T-cell (primary cell): ENCODE measurements at regions of chr5 and their contacts with region 1.

Region 1: DNA sequence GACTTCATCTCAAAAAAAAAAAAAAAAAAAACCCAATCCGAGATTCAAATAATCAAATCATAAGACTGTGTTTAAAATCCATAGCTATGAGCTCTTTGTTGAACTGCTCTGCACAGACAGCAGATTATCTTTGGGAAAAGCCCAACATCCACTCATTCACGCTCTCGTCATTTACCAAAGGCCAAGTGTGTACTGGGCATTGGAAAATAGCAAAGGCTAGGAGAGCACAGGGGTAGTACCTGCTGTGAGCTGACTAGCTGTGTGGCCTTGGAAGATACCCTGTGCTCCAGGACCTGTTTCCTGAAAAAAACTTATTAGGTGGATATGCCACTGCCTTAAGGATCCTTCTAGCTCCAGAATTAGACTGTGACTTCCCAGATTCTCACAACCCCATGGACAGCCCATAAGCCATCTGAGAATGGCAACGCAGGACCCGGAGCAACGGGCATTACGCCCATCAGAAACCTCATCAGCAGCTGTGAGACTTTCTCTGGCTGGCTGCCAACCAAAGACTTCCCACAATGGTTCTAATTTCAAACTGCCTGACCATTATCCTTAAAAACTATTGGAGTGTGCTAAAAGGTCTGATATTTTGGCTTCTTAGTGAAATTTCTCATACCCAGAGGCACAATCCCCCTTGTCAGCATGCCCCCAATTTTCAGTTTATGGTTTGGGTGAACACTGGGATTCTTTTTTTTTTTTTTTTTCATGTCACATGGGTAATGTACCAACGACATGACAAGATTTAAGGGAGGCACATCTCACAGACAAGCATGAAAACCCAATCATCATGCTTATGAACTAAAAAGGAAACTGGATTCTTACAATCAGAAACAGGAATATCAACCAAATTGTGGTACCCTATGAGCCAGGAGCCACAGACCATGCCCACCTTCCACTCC is 16.8 kb downstream of the SERINC5 start:
- DNase-seq: peak in 4 of 35 experiments; percentile 7 to 48 (median 30)
- ATAC-seq: no peak
- H3K4me3 ChIP-seq: peak overlapping the region in 1 of 2 donors; percentile 15
- H3K4me3 Mint-ChIP-seq: peak overlapping the region; percentile 21 to 68 (median 37)
- H3K27ac ChIP-seq: peak overlapping the region; percentile 25
- H3K27ac Mint-ChIP-seq: peak overlapping the region; percentile 76 to 82
- H3K4me1 ChIP-seq: peaks cover 42 to 55% of the 10 kb centered on the region in 2 experiments
- H3K4me1 Mint-ChIP-seq: peaks cover 77 to 84% (median 83%) of the 10 kb centered on the region in 3 donors
- H3K27me3 ChIP-seq: no peaks in the 10 kb centered on the region
- H3K27me3 Mint-ChIP-seq: no peaks in the 10 kb centered on the region

Region 2: DNA sequence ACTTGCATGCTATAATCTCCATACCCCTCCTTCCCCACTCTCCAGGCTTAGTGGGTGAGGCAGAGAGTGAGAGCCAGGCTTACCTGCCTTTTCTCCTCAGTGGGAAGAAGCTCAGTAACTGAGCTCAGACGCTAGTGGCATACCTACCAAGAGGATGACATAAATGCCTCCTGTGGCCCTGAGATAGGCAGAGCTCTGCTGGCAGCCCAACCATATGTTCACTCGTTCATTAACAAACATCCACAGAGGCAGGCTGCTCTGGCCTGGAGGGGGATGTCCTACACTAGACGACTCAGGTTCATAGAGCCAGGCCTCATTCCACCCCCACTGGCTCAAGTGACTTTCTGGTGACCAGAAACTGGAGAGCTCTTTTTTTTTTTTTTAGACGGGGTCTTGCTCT is 122.6 kb before region 1 on chr5:
- CTCF ChIA-PET with region 1: no interaction called
- POLR2A ChIA-PET with region 1: interaction called in 1 of 2 experiments, 13 read pairs
- DNase-seq: no peak
- ATAC-seq: peak in 1 of 4 experiments; percentile 41
- H3K4me3 ChIP-seq: no peak overlapping the region
- H3K4me3 Mint-ChIP-seq: peak overlapping the region in 1 of 3 donors; percentile 41
- H3K27ac ChIP-seq: no peak overlapping the region
- H3K27ac Mint-ChIP-seq: peak overlapping the region; percentile 74 to 87
- H3K4me1 ChIP-seq: peaks cover 3 to 18% of the 10 kb centered on the region in 2 experiments
- H3K4me1 Mint-ChIP-seq: peaks cover 33 to 53% (median 48%) of the 10 kb centered on the region in 3 donors
- H3K27me3 ChIP-seq: no peaks in the 10 kb centered on the region
- H3K27me3 Mint-ChIP-seq: no peaks in the 10 kb centered on the region

Region 3: GRCh38 chr5:80156156-80156555 is 82.9 kb before region 1 on chr5:
- CTCF ChIA-PET with region 1: interaction called in 1 of 2 experiments, 4 read pairs
- POLR2A ChIA-PET with region 1: interaction called, 6 to 11 read pairs
- DNase-seq: no peak
- ATAC-seq: no peak
- H3K4me3 ChIP-seq: no peak overlapping the region
- H3K4me3 Mint-ChIP-seq: no peak overlapping the region
- H3K27ac ChIP-seq: no peak overlapping the region
- H3K27ac Mint-ChIP-seq: peak overlapping the region; percentile 69 to 96
- H3K4me1 ChIP-seq: peaks cover 20 to 28% of the 10 kb centered on the region in 2 experiments
- H3K4me1 Mint-ChIP-seq: peaks cover 52 to 61% (median 56%) of the 10 kb centered on the region in 3 donors
- H3K27me3 ChIP-seq: no peaks in the 10 kb centered on the region
- H3K27me3 Mint-ChIP-seq: no peaks in the 10 kb centered on the region

Region 4: DNA sequence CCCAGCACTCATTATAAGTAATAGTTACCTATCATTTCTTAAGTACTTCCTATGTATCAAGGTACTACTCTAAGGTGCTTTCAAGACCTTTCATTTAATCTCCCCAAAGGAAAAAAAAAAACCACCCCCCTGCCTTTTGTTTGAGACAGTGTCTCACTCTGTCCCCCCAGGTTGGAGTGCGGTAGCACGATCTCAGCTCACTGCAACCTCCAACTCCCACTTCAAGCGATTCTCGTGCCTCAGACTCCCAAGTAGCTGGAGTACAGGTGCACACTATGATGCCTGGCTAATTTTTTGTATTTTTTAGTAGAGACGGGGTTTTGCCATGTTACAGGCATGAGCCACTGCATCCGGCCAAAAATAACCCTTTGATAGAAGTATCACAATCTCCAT is 13.1 kb before region 1 on chr5:
- CTCF ChIA-PET with region 1: no interaction called
- POLR2A ChIA-PET with region 1: interaction called in 1 of 2 experiments, 11 read pairs
- DNase-seq: peak in 3 of 35 experiments; percentile 31 to 40 (median 32)
- ATAC-seq: peak; percentile 31 to 68 (median 44)
- H3K4me3 ChIP-seq: no peak overlapping the region
- H3K4me3 Mint-ChIP-seq: peak overlapping the region; percentile 18 to 69 (median 34)
- H3K27ac ChIP-seq: no peak overlapping the region
- H3K27ac Mint-ChIP-seq: peak overlapping the region; percentile 78 to 84
- H3K4me1 ChIP-seq: peaks cover 40 to 53% of the 10 kb centered on the region in 2 experiments
- H3K4me1 Mint-ChIP-seq: peaks cover 67 to 76% (median 70%) of the 10 kb centered on the region in 3 donors
- H3K27me3 ChIP-seq: no peaks in the 10 kb centered on the region
- H3K27me3 Mint-ChIP-seq: no peaks in the 10 kb centered on the region

Region 5: GRCh38 chr5:80255732-80256479 is 16.9 kb after region 1 on chr5 and contains the start of gene SERINC5:
- CTCF ChIA-PET with region 1: interaction called in 1 of 2 experiments, 3 read pairs
- POLR2A ChIA-PET with region 1: interaction called, 9 to 10 read pairs
- DNase-seq: peak; percentile 64 to 87 (median 79)
- ATAC-seq: peak; percentile 81 to 88 (median 83)
- H3K4me3 ChIP-seq: peak within 1 kb of the TSS; percentile 97 to 98
- H3K4me3 Mint-ChIP-seq: peak within 1 kb of the TSS; percentile 95 to 97 (median 97)
- H3K27ac ChIP-seq: peak within 1 kb of the TSS; percentile 89
- H3K27ac Mint-ChIP-seq: peak within 1 kb of the TSS; percentile 96 to 97
- H3K4me1 ChIP-seq: peaks cover 30 to 54% of the 10 kb centered on the region in 2 experiments
- H3K4me1 Mint-ChIP-seq: peaks cover 45 to 55% (median 54%) of the 10 kb centered on the region in 3 donors
- H3K27me3 ChIP-seq: no peaks in the 10 kb centered on the region
- H3K27me3 Mint-ChIP-seq: no peaks in the 10 kb centered on the region
- total RNA-seq, gene SERINC5: 109 to 170 (median 112) TPM

Region 6: GRCh38 chr5:80576383-80576782 is 337.4 kb after region 1 on chr5:
- CTCF ChIA-PET with region 1: no interaction called
- POLR2A ChIA-PET with region 1: no interaction called
- DNase-seq: no peak
- ATAC-seq: no peak
- H3K4me3 ChIP-seq: no peak overlapping the region
- H3K4me3 Mint-ChIP-seq: no peak overlapping the region
- H3K27ac ChIP-seq: no peak overlapping the region
- H3K27ac Mint-ChIP-seq: no peak overlapping the region
- H3K4me1 ChIP-seq: no peaks in the 10 kb centered on the region
- H3K4me1 Mint-ChIP-seq: peaks cover 0 to 3% (median 0%) of the 10 kb centered on the region in 3 donors
- H3K27me3 ChIP-seq: peaks cover 9 to 14% of the 10 kb centered on the region in 2 experiments
- H3K27me3 Mint-ChIP-seq: peaks cover 29 to 34% of the 10 kb centered on the region in 2 donors